ENCODE measurements at regions of chr1 and their contacts with region 1.

Region 1: GRCh38 chr1:16009030-16009709 is 5.1 kb downstream of the SRARP start:
- DNase-seq: peak; percentile 64 to 98
- H3K4me3 ChIP-seq: no peak overlapping the region
- H3K27ac ChIP-seq: no peak overlapping the region
- H3K4me1 ChIP-seq: peaks cover 4 to 15% (median 11%) of the 10 kb centered on the region in 4 experiments
- H3K27me3 ChIP-seq: no peaks in the 10 kb centered on the region; a peak in 1 of 7 replicates
- CTCF ChIP-seq: peak; percentile 96 to 100 (median 96)
- EP300 ChIP-seq: no peak
- POLR2A ChIP-seq: no peak
- RAD21 ChIP-seq: peak; percentile 99

Region 2: DNA sequence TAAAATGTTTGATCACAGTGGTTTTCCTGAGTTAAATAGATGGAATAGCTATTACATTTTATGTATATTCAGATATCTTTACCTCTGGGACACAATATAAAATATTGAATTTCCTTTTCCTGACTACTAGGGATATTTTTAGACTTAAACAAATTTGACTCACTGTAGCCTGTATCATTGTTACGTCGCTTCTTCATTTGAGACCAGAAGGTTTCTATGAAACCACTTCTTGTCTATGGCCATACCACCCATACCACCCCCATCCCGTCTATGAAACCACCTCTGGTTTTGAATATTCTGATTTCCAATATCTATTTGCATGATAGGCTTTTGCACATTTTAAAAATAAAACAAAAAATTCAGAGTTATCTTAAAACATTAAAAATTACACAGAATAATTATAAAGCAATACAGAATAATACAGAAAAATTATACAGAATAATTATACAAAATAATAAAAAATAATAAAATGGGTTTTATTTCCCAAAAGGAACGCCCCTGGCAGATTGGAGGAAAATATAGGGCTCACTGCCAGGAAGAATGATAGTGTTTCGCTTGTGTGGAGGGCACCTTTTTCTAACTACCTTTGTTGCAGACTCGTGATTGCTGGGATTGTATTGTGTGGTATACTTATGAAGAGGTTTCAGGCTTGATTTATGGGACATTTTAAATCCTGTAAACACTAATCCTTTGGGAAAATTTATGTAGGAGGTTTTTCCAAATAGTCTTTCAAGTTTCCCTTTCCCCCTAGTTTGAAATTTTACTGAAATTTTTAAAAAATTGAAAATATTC is 156.9 kb before region 1 on chr1:
- CTCF ChIA-PET with region 1: no interaction called
- POLR2A ChIA-PET with region 1: no interaction called
- DNase-seq: no peak
- H3K4me3 ChIP-seq: no peak overlapping the region
- H3K27ac ChIP-seq: no peak overlapping the region
- H3K4me1 ChIP-seq: peaks cover 0 to 6% (median 2%) of the 10 kb centered on the region in 4 experiments; a peak in 2 of 7 replicates
- H3K27me3 ChIP-seq: no peaks in the 10 kb centered on the region; a peak in 1 of 7 replicates
- CTCF ChIP-seq: no peak
- EP300 ChIP-seq: no peak
- POLR2A ChIP-seq: no peak
- RAD21 ChIP-seq: no peak

Region 3: GRCh38 chr1:15941899-15942660 is 67.1 kb before region 1 on chr1:
- CTCF ChIA-PET with region 1: no interaction called
- POLR2A ChIA-PET with region 1: no interaction called
- DNase-seq: no peak
- H3K4me3 ChIP-seq: no peak overlapping the region
- H3K27ac ChIP-seq: no peak overlapping the region
- H3K4me1 ChIP-seq: no peaks in the 10 kb centered on the region; a peak in 1 of 7 replicates
- H3K27me3 ChIP-seq: no peaks in the 10 kb centered on the region
- CTCF ChIP-seq: no peak
- EP300 ChIP-seq: no peak
- POLR2A ChIP-seq: peak in 1 of 2 experiments; percentile 27; a peak in 1 of 3 replicates
- RAD21 ChIP-seq: no peak

Region 4: GRCh38 chr1:15957228-15958095 is 51.7 kb before region 1 on chr1:
- CTCF ChIA-PET with region 1: interaction called, 23 read pairs
- POLR2A ChIA-PET with region 1: interaction called, 3 read pairs
- DNase-seq: peak in 1 of 2 experiments; percentile 76
- H3K4me3 ChIP-seq: no peak overlapping the region
- H3K27ac ChIP-seq: no peak overlapping the region
- H3K4me1 ChIP-seq: peaks cover 6 to 18% (median 11%) of the 10 kb centered on the region in 4 experiments
- H3K27me3 ChIP-seq: peaks cover 0 to 3% (median under 1%) of the 10 kb centered on the region in 4 experiments; a peak in 2 of 7 replicates
- CTCF ChIP-seq: peak; percentile 52 to 75 (median 72)
- EP300 ChIP-seq: no peak
- POLR2A ChIP-seq: no peak
- RAD21 ChIP-seq: peak; percentile 34 to 60; a peak in 3 of 4 replicates

Region 5: GRCh38 chr1:16026723-16027484 is 17.7 kb after region 1 on chr1:
- CTCF ChIA-PET with region 1: interaction called, 74 read pairs
- POLR2A ChIA-PET with region 1: interaction called, 13 read pairs
- DNase-seq: peak; percentile 87 to 97
- H3K4me3 ChIP-seq: peak overlapping the region in 3 of 4 experiments; percentile 30 to 54 (median 42); a peak in 6 of 8 replicates
- H3K27ac ChIP-seq: no peak overlapping the region
- H3K4me1 ChIP-seq: peaks cover 0 to 12% (median 8%) of the 10 kb centered on the region in 4 experiments; a peak in 6 of 7 replicates
- H3K27me3 ChIP-seq: peaks cover 0 to 7% (median under 1%) of the 10 kb centered on the region in 4 experiments; a peak in 3 of 7 replicates
- CTCF ChIP-seq: no peak
- EP300 ChIP-seq: no peak
- POLR2A ChIP-seq: no peak
- RAD21 ChIP-seq: no peak

Region 6: DNA sequence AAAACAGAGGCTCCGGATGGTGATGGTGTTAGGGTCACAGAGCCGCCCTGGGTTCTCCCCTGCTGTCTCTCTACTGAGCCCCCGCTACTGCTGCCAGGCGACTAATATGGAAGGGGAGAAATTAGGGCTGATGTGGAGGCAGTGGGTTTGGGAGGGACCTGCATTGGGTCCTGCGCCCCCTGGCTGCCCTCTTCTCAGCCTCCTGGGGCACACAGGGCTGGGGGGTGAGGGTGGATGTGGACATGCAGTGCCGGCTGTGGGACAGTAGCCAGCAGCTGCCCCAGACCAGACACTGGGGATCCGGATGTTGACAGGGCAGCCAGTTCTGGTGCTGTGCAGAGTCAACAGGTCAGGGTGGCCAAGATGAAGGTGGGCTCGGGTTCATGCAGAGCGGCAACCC is 32.9 kb after region 1 on chr1:
- CTCF ChIA-PET with region 1: interaction called, 41 read pairs
- POLR2A ChIA-PET with region 1: interaction called, 3 read pairs
- DNase-seq: no peak
- H3K4me3 ChIP-seq: no peak overlapping the region
- H3K27ac ChIP-seq: no peak overlapping the region
- H3K4me1 ChIP-seq: no peaks in the 10 kb centered on the region
- H3K27me3 ChIP-seq: no peaks in the 10 kb centered on the region
- CTCF ChIP-seq: peak; percentile 17 to 28 (median 27); a peak in 3 of 4 replicates
- EP300 ChIP-seq: no peak
- POLR2A ChIP-seq: no peak
- RAD21 ChIP-seq: 0 out of 4 replicates have a peak, but pooled peaks of 1 of the 2 experiments have one; percentile 3

Region 7: DNA sequence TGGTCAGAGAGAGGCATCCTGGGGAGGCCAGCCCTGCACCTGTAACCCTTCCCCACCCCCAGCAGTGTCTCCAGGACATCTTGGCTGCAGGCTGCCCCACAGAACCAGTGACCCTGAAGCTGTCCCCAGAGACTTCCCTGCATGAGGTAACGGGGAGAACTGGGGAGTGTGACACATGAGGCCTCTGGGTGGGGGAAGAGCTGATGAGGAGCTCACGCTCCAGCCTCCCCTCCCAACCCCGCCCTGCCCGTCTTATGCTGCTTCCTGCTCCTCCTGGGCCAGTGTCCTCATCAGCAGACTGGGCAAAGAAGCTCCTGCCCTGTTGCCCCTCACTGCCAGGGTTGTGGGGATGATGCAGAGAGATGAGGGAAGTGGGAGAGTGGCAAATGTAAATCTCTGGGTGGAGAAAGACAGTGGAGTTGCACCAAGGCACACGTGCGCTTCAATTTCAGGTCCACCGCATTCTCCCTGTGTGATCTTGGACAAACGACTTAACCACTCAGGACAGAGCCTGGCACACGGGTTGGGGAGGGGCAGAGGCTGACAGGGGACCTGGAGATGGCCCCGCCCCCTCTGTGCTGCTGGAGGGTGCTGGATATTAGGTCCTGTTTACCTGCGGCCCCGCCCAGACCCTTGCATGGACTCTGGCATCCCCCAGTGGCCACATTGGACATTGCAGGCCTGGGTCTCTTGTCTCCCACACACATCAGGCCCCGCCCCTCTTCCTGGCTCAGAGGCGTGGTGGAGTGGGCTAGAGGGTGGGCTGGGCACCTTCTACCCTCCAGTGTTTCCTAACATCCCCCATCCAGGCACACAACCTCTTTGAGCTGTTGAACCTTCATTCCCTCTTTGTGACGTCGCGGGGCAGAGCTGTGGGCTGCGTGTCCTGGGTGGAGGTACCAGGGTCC is 46.7 kb after region 1 on chr1:
- CTCF ChIA-PET with region 1: interaction called, 34 read pairs
- POLR2A ChIA-PET with region 1: interaction called, 3 read pairs
- DNase-seq: peak; percentile 87 to 98
- H3K4me3 ChIP-seq: no peak overlapping the region
- H3K27ac ChIP-seq: no peak overlapping the region
- H3K4me1 ChIP-seq: peaks cover 0 to 6% (median 3%) of the 10 kb centered on the region in 4 experiments; a peak in 5 of 7 replicates
- H3K27me3 ChIP-seq: no peaks in the 10 kb centered on the region
- CTCF ChIP-seq: peak; percentile 87 to 97 (median 90)
- EP300 ChIP-seq: no peak
- POLR2A ChIP-seq: no peak
- RAD21 ChIP-seq: peak; percentile 91 to 92

Region 8: DNA sequence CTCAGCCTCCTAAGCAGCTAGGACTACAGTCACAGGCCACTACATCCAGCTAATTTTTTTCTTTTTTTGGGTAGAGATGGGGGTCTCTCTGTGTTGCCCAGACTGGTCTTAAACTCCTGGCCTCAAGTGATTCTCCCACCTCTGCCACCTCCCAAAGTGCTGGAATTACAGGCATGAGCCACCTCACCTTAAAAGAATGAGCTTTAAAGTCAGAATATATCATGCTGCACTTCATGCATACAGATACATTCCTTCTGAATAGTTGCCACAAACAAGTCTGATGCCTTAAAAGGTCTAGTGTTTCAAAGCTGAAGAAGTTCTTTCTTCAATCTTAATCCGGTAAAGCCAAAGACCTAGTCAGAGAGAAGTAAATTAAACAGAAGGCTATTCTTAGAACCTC is 251.6 kb after region 1 on chr1:
- CTCF ChIA-PET with region 1: no interaction called
- POLR2A ChIA-PET with region 1: no interaction called
- DNase-seq: no peak
- H3K4me3 ChIP-seq: no peak overlapping the region
- H3K27ac ChIP-seq: no peak overlapping the region
- H3K4me1 ChIP-seq: no peaks in the 10 kb centered on the region; a peak in 1 of 7 replicates
- H3K27me3 ChIP-seq: no peaks in the 10 kb centered on the region
- CTCF ChIP-seq: no peak
- EP300 ChIP-seq: no peak
- POLR2A ChIP-seq: no peak
- RAD21 ChIP-seq: no peak

Measured in H1 (cell line).